ENCODE measurements at regions of chr17 and their contacts with region 1.

Region 1: DNA sequence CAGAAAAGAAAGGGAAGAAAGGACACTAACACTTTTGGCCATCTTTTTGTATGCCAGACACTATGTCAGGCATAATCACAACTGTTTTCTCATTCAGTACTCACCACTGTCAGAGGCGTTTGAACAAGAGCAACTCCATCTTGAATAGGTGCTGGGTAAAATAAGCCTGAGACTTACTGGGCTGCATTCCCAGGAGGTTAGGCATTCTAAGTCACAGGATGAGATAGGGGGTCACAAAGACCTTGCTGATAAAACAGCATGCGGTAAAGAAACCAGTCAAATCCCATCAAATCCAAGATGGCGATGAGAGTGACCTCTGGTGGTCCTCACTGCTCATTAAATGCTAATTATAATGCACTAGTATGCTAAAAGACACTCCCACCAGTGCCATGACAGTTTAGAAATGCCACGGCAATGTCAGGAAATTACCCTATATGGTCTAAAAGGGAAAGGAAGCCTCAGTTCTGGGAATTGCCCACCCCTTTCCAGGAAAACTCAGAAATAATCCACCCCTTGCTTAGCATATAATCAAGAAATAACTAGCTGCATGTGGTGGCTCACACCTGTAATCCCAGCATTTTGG is 14.9 kb upstream of the LYRM9 start:
- DNase-seq: no peak
- CTCF ChIP-seq: no peak

Region 2: GRCh38 chr17:27892866-27893769 is 14.9 kb before region 1 on chr17 and contains the start of gene LYRM9:
- CTCF ChIA-PET with region 1: interaction called, 13 read pairs
- POLR2A ChIA-PET with region 1: no interaction called
- DNase-seq: peak; percentile 96
- CTCF ChIP-seq: peak; percentile 95

Region 3: GRCh38 chr17:27959382-27959709 is 51.3 kb after region 1 on chr17:
- CTCF ChIA-PET with region 1: no interaction called
- POLR2A ChIA-PET with region 1: no interaction called
- DNase-seq: no peak
- CTCF ChIP-seq: no peak